Prostate gland (tissue), 2 donors: ENCODE measurements at regions of chr6 and their contacts with region 1.

Region 1: GRCh38 chr6:55445648-55446204 is 118.5 kb downstream of the GFRAL start:
- DNase-seq: no peak
- H3K4me3 ChIP-seq: no peak overlapping the region
- H3K27ac ChIP-seq: no peak overlapping the region
- H3K4me1 ChIP-seq: no peaks in the 10 kb centered on the region
- H3K27me3 ChIP-seq: no peaks in the 10 kb centered on the region
- CTCF ChIP-seq: peak; percentile 29 to 77 (median 66)
- POLR2A ChIP-seq: no peak

Region 2: DNA sequence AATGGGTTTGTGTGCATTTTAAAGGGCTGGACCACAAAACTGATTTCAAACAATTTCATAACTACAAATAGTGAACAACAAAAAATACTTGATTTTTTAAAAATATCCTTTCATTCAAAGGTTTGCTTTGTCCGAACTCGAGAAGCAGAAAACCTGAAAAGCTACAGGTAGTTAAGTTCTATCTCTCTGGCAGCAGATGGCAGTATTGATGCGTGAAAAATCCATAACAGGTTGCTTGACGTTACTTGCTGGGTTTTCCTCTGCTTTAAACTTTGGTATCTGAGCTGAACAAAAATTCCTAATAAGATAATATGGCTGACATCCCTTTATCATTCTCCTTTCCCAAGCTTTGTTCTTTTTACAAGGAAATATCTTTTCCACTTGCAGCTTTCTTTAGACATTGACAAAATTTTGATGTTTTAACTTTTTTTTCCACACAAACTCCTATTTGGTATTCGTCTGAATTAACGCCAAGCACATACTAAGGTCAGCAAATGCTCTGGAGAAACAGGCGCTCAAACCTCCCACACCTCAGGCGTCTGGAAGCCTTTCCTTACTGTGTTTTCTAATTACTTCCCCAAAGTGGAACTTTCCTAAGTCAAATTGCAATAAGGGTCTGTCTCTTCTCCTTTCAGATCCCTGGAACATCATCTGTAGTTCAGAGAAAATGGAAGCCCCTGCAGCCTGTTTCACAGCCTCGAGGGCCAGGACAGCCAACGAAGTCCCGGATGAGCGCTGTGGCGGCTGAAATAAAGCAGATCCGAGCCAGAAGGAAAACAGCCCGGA is 168.8 kb before region 1 on chr6:
- intact Hi-C with region 1: loop called (anchors 5 kb)
- DNase-seq: peak; percentile 36
- H3K4me3 ChIP-seq: no peak overlapping the region
- H3K27ac ChIP-seq: no peak overlapping the region
- H3K4me1 ChIP-seq: no peaks in the 10 kb centered on the region
- H3K27me3 ChIP-seq: no peaks in the 10 kb centered on the region
- CTCF ChIP-seq: peak in 3 of 4 experiments; percentile 48 to 62 (median 60)
- POLR2A ChIP-seq: no peak

Region 3: DNA sequence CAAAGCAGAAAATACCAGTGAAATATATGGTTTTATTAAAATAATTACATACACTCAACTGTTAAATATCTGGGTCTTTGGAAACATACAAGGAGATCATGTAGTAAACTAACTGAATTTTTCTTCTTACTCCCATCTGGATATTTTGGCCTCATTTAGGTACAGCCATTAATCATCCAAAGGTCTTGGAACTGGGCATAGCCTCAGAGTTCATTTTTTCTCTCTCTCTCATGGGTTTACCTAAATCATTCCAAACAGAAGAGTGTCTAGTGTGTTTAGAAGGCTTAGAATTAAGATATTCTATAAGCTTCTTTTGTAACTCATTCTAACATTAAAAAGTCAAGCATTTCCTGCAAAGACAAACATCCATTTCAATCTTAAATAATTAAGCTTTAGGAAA is 53.9 kb after region 1 on chr6:
- intact Hi-C with region 1: no loop called
- DNase-seq: no peak
- H3K4me3 ChIP-seq: no peak overlapping the region
- H3K27ac ChIP-seq: no peak overlapping the region
- H3K4me1 ChIP-seq: no peaks in the 10 kb centered on the region
- H3K27me3 ChIP-seq: no peaks in the 10 kb centered on the region
- CTCF ChIP-seq: no peak
- POLR2A ChIP-seq: no peak

Region 4: GRCh38 chr6:55886185-55886836 is 440.6 kb after region 1 on chr6:
- intact Hi-C with region 1: loop called (anchors 2 kb)
- DNase-seq: no peak
- H3K4me3 ChIP-seq: no peak overlapping the region
- H3K27ac ChIP-seq: no peak overlapping the region
- H3K4me1 ChIP-seq: no peaks in the 10 kb centered on the region
- H3K27me3 ChIP-seq: no peaks in the 10 kb centered on the region
- CTCF ChIP-seq: peak in 3 of 4 experiments; percentile 41 to 55 (median 50)
- POLR2A ChIP-seq: no peak

Region 5: DNA sequence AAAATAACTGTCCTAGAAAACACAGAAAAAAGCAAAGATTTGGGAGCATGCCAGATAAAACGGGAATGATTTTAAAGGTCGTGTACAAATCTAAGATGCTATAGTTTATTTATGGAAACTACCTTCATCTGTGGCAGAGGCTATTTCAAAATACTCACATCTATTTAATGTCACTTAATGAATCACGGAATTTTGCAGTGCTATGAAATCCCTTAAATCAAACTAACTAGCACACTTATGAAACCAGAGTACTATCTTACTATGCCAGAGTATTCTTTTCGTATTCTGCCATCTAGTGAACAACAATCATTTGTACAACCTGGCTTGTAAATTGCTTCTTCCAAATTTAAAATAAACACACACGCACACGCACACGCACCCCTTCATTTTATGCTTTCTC is 507.6 kb after region 1 on chr6:
- intact Hi-C with region 1: loop called (anchors 5 kb)
- DNase-seq: no peak
- H3K4me3 ChIP-seq: no peak overlapping the region
- H3K27ac ChIP-seq: no peak overlapping the region
- H3K4me1 ChIP-seq: no peaks in the 10 kb centered on the region
- H3K27me3 ChIP-seq: no peaks in the 10 kb centered on the region
- CTCF ChIP-seq: peak in 3 of 4 experiments; percentile 29 to 55 (median 50)
- POLR2A ChIP-seq: no peak

Region 6: GRCh38 chr6:56292505-56293181 is 846.9 kb after region 1 on chr6:
- intact Hi-C with region 1: loop called (anchors 10 kb)
- DNase-seq: no peak
- H3K4me3 ChIP-seq: no peak overlapping the region
- H3K27ac ChIP-seq: no peak overlapping the region
- H3K4me1 ChIP-seq: no peaks in the 10 kb centered on the region
- H3K27me3 ChIP-seq: no peaks in the 10 kb centered on the region
- CTCF ChIP-seq: peak; percentile 32 to 66 (median 50)
- POLR2A ChIP-seq: no peak